Lower leg skin (tissue), 4 donors: ENCODE measurements at regions of chrX and their contacts with region 1.

Region 1: GRCh38 chrX:73855546-73855945 is 292.5 kb downstream of the CHIC1 start:
- DNase-seq: peak; percentile 32 to 92
- H3K4me3 ChIP-seq: no peak overlapping the region
- CTCF ChIP-seq: no peak
- POLR2A ChIP-seq: no peak

Region 2: GRCh38 chrX:71885099-71885498 is 1970.4 kb before region 1 on chrX:
- intact Hi-C with region 1: no loop called
- DNase-seq: no peak
- H3K4me3 ChIP-seq: no peak overlapping the region
- CTCF ChIP-seq: no peak
- POLR2A ChIP-seq: no peak

Region 3: DNA sequence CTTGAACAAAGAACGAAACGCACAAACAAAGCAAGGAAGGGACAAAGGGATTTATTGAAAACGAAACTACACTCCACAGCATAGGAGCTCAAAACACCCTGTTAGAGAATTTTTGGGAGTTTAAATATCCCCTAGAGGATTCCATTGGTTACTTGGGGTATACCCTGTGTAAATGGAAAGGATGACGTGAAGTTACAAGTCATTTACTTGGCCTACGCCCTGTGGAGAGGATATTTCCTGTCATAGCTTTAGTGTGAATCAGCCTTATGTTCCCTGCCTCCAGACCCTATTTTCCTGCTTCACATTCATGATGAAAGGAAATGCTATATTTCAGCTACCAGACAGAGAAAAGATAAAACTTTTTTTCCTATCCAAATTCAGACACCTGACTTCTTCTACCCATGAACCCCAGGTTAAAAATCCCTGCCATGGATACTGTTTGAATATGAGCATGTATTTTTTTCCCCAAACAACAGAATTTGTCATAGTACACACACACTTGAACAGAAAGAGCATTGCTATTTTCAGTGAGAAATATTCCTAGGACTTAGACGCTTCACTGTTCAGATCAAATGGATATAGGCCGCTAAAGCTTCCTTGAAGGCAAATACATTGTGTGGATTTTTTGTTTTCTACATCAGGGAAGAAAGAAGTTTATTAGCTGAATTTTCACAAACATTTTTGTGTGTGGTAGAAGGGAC is 1653.6 kb before region 1 on chrX:
- intact Hi-C with region 1: no loop called
- DNase-seq: no peak
- H3K4me3 ChIP-seq: no peak overlapping the region
- CTCF ChIP-seq: no peak
- POLR2A ChIP-seq: no peak

Region 4: GRCh38 chrX:73817393-73818199 is 38.0 kb before region 1 on chrX:
- intact Hi-C with region 1: no loop called
- DNase-seq: no peak
- H3K4me3 ChIP-seq: no peak overlapping the region
- CTCF ChIP-seq: no peak
- POLR2A ChIP-seq: no peak

Region 5: DNA sequence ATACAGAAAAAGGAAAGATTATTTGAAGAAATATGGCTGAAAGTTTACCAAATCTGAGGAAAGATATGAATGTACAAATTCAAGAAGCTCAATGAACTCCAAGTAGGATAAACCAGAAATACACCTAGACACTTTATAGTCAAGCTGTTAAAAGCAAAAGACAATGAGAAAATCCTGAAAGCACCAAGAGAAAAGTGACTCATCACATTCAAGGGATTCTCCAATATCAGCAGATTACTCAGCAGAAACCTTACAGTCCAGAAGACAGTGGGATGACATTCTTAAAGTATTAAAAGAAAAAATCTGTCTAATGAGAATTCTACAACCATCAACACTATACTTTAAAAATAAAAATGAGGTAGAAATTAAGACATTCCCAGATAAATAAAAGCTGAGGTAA is 224.6 kb after region 1 on chrX:
- intact Hi-C with region 1: no loop called
- DNase-seq: no peak
- H3K4me3 ChIP-seq: no peak overlapping the region
- CTCF ChIP-seq: no peak
- POLR2A ChIP-seq: no peak

Region 6: DNA sequence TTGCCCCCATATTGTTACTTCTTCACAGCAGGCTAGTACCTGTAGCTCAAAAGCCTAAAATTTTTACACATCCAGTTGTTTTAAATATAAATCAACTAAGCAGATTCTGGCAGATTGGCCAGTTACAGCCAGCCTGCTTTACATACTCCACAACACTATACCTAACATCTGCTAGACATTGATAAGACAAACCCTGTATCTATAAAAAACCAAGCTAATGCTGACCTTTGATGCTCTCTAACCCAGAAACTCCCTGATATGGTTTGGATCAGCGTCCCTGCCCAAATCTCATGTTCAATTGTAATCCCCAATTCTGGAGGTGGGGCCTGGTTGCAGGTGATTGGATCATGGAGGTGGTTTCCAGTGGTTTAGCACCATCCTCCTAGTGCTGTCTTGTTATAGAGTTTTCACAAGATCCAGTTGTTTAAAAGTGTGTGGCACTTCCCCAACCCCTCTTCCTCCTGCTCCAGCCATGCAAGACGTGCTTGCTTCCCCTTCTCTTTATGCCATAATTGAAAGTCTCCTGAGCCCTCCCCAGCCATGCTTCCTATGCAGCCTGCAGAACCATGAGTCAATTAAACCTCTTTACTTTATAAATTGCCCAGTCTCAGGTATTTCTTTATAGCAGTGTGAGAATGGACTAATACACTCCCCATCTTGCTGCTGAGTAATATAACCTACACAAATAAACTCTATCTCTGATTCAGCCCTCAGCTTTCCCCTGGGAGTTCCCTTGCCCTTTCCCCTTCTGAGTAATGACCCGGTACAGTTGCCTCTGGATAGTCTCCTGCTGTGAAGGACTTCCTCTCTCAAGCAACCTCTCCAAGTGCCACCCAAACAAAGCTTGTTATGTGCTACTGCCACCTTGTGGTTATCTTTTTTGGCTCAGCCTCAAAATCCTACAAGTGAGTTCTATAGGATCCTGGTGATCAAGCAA is 488.1 kb after region 1 on chrX:
- intact Hi-C with region 1: loop called (anchors 10 kb)
- DNase-seq: peak in 1 of 2 donors; percentile 41
- H3K4me3 ChIP-seq: no peak overlapping the region
- CTCF ChIP-seq: no peak
- POLR2A ChIP-seq: no peak